WTC11 (cell line): ENCODE measurements at regions of chr15 and their contacts with region 1.

Region 1: DNA sequence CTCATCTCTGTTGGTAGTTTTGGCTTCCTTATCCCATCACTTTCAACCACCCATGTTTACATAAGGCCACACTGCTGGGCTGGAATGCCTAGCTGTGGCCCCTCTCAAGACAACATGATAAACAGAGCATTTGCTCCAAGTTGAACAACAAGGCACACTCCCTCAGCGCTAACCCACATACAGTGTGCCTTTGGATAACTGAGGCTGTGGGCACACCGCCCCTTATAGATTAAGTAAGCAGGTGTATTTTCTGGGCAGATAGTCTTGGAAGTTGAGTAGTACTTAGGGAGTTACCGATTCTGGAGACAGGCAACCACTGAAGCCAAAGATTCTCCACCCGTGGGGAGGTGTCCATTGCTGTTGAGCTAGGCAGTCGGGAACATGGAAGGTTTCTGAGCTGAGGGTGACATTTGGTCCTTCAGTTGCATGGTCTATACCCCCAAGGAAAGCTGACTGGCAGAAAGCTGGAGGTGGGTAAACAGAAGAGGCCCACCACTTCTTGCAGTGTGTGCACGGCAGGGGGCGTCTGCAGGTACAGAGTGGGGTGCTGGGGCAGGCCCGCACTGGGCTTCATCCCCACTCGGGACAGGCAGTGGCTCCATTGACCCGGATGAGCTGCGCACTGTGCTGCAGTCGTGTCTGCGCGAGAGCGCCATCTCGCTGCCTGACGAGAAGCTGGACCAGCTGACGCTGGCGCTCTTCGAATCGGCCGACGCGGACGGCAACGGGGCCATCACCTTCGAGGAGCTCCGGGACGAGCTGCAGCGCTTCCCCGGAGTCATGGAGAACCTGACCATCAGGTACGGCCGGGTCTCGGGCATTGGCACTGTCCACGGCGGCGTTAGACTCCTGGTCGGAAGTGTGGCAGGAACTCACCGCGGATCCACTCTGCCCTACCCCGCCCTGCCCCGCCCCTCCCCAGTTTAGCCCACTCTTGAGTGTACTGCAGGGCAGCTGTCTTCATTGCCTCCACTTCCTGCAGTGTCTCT is 16.8 kb downstream of the NOX5 start:
- DNase-seq: peak; percentile 81
- ATAC-seq: peak; percentile 93
- H3K4me3 Mint-ChIP-seq: peak overlapping the region; percentile 58
- H3K27ac Mint-ChIP-seq: no peak overlapping the region
- H3K4me1 Mint-ChIP-seq: peaks cover 10% of the 10 kb centered on the region
- H3K27me3 Mint-ChIP-seq: peaks cover 18% of the 10 kb centered on the region
- CTCF ChIP-seq: 0 out of 2 replicates have a peak, but pooled peaks have one; percentile 32

Region 2: DNA sequence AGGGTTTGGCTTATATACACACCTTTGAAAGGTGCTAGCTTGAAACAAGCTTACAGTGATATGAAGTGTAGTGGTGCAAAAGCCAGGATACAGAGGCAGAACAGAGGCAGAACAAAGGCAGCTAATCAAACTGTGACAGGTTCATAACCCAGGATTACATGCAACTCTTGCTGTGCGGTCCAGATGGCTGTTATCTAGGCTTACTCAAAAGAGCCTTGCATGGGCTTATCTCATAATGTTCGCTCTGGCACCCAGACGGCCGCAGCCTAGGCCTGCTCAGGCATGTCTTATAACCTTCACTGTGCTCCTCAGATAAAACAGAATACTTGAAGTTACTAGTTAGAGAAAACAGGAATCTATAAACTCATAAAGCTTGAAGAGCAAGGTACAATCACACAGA is 39.6 kb before region 1 on chr15:
- CTCF ChIA-PET with region 1: interaction called, 14 read pairs
- POLR2A ChIA-PET with region 1: no interaction called
- DNase-seq: no peak
- ATAC-seq: no peak
- H3K4me3 Mint-ChIP-seq: no peak overlapping the region
- H3K27ac Mint-ChIP-seq: no peak overlapping the region
- H3K4me1 Mint-ChIP-seq: peaks cover 26% of the 10 kb centered on the region
- H3K27me3 Mint-ChIP-seq: peaks cover 32% of the 10 kb centered on the region
- CTCF ChIP-seq: no peak

Region 3: DNA sequence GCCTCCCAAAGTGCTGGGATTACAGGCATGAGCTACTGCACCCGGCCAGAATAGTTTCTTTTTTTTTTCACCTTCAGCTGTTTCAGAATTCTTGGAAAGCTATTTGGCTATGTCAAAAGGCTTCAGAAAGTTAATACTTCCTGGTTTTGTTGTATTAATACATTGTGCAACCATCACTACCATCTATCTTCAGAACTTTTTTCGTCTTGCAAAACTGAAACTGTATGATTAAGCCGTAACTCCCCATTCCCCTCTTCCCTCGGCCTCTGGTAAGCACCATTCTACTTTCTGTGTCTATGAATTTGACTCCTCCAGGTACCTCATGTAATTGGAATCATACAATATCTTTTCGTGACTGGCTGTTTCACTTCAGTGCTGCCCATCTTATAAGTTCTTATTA is 22.0 kb before region 1 on chr15:
- CTCF ChIA-PET with region 1: interaction called, 37 read pairs
- POLR2A ChIA-PET with region 1: no interaction called
- DNase-seq: no peak
- ATAC-seq: no peak
- H3K4me3 Mint-ChIP-seq: no peak overlapping the region
- H3K27ac Mint-ChIP-seq: no peak overlapping the region
- H3K4me1 Mint-ChIP-seq: peaks cover 4% of the 10 kb centered on the region; the same call in 1 of the 2 replicates
- H3K27me3 Mint-ChIP-seq: peaks cover 11% of the 10 kb centered on the region
- CTCF ChIP-seq: no peak

Region 4: GRCh38 chr15:69045808-69046207 is 14.5 kb after region 1 on chr15:
- CTCF ChIA-PET with region 1: interaction called, 27 read pairs
- POLR2A ChIA-PET with region 1: no interaction called
- DNase-seq: peak; percentile 31
- ATAC-seq: peak; percentile 65
- H3K4me3 Mint-ChIP-seq: no peak overlapping the region
- H3K27ac Mint-ChIP-seq: no peak overlapping the region
- H3K4me1 Mint-ChIP-seq: peaks cover 9% of the 10 kb centered on the region
- H3K27me3 Mint-ChIP-seq: peaks cover 8% of the 10 kb centered on the region
- CTCF ChIP-seq: no peak

Region 5: DNA sequence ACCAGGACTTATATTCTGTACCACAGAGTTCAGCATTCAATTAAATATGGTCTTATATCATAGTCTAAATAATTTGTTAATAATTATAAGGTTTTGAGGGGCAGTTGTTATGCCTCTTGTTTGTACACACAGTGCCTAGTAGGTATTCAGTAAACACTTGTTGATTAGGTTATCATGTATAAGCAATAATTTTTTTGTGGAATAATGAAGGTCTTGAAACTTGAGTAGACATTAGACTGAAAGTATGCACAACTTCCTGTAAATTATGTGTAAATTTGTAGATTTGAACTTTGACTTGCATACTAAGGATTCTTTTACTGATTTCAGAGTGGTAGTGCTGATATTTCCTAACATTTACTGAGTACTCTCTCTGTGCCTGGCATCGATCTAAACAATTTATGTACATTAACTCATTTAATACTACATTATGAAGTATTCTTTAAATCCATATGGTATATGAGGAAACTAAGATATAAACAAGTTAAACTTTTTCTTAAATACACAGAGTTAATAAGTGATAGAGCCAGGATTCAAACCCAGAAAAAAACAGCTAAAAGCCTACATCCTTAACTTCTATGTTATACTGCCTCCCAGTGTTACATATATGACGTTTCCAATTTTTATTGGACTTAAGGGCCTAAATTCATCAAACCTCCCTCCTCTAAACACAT is 194.2 kb after region 1 on chr15:
- CTCF ChIA-PET with region 1: interaction called, 10 read pairs
- POLR2A ChIA-PET with region 1: no interaction called
- DNase-seq: no peak
- ATAC-seq: 0 out of 2 replicates have a peak, but pooled peaks have one; percentile 38
- H3K4me3 Mint-ChIP-seq: no peak overlapping the region
- H3K27ac Mint-ChIP-seq: no peak overlapping the region
- H3K4me1 Mint-ChIP-seq: peaks cover 15% of the 10 kb centered on the region
- H3K27me3 Mint-ChIP-seq: no peaks in the 10 kb centered on the region
- CTCF ChIP-seq: no peak

Region 6: GRCh38 chr15:69394556-69395282 is 363.4 kb after region 1 on chr15:
- CTCF ChIA-PET with region 1: interaction called, 14 read pairs
- POLR2A ChIA-PET with region 1: no interaction called
- DNase-seq: peak; percentile 97
- ATAC-seq: peak; percentile 96
- H3K4me3 Mint-ChIP-seq: peak overlapping the region; percentile 33; the same call in 1 of the 2 replicates
- H3K27ac Mint-ChIP-seq: no peak overlapping the region
- H3K4me1 Mint-ChIP-seq: peaks cover 20% of the 10 kb centered on the region
- H3K27me3 Mint-ChIP-seq: no peaks in the 10 kb centered on the region
- CTCF ChIP-seq: peak; percentile 93